Activated CD4-positive, alpha-beta memory T cell treated with anti-CD3 and anti-CD28 coated beads for 36 hours (primary cell): ENCODE measurements at regions of chr16 and their contacts with region 1.

Region 1: DNA sequence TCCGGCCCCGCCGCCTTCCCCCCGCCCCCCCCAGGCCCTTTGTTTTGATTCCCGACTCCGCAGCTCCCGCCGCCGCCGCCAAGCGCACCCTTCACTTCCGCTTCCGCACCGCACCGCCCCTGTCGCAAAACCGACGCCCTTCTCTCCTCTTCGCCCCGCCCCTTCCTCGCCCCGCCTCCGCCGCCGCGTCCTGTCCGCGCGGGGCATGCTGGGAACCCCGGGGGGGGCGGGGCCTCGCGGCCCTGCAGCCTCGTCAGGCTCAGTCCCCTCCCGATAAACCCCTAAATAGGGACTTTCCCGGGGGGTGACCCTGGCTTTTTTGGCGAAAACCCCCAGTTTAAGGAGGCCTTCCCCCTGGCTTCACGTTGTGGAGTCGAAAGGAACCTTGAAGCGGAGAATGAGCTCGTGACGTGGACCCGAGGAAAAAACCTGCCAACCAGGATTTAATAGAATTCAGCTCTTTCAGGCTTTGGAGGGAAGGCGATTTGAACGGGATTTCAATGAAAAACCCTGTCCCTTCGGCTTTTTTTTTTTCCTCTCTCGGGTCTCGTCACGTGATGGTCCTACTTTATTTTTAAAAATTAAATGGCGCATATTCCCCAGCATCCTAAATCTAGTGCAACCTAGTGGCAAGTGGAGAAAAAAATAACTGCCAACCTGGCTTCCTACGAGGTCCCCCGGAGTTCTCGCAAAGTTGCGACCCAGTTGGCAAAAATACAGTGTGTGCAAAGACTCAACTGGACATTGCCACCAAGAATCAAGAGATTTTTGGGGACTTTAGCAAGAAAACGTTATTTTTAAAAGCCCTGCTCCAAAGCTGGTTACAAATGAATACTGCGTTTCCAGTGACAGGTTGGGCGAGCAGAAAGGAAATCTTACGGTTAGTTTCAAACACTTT is at the start of gene MARF1:
- DNase-seq: peak; percentile 99
- H3K4me3 Mint-ChIP-seq: peak within 1 kb of the TSS; percentile 82
- H3K27ac Mint-ChIP-seq: peak within 1 kb of the TSS; percentile 98
- H3K4me1 Mint-ChIP-seq: peaks cover 45% of the 10 kb centered on the region
- H3K27me3 Mint-ChIP-seq: no peaks in the 10 kb centered on the region
- total RNA-seq, gene MARF1: 61.9 to 62.6 TPM

Region 2: DNA sequence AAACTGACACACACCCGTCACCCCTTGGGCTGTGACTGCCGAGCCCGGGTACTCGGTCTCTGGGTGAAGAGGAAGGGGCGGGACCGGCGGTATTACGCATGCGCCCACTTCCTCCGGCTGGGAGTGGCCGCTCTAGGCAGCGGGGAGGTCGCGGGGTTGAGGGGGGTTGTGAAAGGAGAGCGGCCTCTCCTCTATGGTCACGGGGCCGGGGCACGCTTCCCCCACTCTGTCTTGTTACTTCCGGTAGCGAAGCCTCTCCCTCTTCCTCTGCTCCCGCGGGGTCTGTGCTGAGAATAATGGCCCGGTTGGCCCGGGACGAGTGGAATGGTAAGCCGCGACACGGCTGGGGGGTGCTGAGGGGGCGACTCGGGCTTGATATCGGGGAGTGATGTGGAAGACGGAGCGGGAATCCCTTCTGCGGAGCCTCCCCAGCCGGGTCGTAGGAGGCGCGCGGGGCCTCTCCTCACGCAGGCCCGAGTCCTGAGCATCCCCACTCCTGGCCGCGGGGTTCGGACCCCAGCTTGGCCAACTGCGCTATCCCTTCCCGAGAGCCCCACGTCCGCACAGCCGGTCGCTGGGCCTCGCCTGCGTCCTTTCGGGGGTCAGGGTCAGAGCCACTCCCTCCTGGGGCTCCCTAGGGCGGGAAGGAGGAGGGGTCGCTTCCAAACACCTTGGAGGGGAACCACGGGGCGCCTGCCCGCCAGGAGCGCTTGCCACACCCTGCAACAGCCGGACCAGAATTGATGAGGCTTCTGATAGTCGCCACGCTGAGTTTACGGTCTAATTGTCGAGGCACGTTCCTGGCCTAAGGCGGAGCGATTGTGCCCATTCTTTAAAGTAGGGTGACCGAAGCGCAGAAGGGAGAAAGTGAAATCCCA is 1010.4 kb before region 1 on chr16 and contains the start of gene BFAR:
- CTCF ChIA-PET with region 1: no interaction called
- POLR2A ChIA-PET with region 1: no interaction called
- intact Hi-C with region 1: loop called (anchors 5 kb)
- DNase-seq: peak; percentile 99
- H3K4me3 Mint-ChIP-seq: peak within 1 kb of the TSS; percentile 100
- H3K27ac Mint-ChIP-seq: peak within 1 kb of the TSS; percentile 96
- H3K4me1 Mint-ChIP-seq: peaks cover 57% of the 10 kb centered on the region
- H3K27me3 Mint-ChIP-seq: no peaks in the 10 kb centered on the region
- total RNA-seq, gene BFAR: 46.5 to 51.4 TPM

Region 3: DNA sequence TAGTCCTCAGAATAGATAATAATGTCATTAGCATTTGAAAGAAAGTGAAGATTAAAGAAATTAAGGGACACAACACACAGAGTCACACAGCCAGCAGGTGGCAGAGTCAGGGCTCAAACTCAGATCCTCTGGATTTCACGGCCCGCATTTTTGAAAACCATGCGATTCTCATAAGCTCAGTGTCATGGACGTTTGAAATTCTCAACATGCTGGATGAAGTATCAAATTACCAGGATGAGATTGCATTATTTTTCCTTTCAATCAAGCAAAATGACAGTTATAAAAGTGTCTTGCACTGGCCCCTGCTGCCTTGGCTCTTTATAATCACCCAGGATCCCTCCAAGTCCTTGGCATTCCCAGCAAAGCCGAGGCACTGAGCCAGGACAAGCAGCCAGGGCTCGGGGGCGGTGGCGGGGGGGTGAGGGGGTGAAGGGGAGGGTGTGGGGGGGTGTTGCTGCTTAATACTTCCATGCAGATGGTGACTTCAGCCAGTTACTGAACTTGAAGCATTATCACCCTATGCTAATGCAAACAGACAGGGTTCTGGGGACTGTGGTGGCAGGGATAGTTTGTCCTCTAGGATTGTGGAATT is 215.6 kb before region 1 on chr16:
- CTCF ChIA-PET with region 1: interaction called, 12 read pairs
- POLR2A ChIA-PET with region 1: no interaction called
- intact Hi-C with region 1: loop called (anchors 1 kb)
- DNase-seq: peak; percentile 68
- H3K4me3 Mint-ChIP-seq: no peak overlapping the region
- H3K27ac Mint-ChIP-seq: no peak overlapping the region
- H3K4me1 Mint-ChIP-seq: peaks cover 2% of the 10 kb centered on the region
- H3K27me3 Mint-ChIP-seq: peaks cover 2% of the 10 kb centered on the region

Region 4: GRCh38 chr16:15672514-15673167 is 29.3 kb after region 1 on chr16:
- CTCF ChIA-PET with region 1: no interaction called
- POLR2A ChIA-PET with region 1: no interaction called
- intact Hi-C with region 1: loop called (anchors 2 kb)
- DNase-seq: peak; percentile 87
- H3K4me3 Mint-ChIP-seq: peak overlapping the region; percentile 52
- H3K27ac Mint-ChIP-seq: peak overlapping the region; percentile 93
- H3K4me1 Mint-ChIP-seq: peaks cover 43% of the 10 kb centered on the region
- H3K27me3 Mint-ChIP-seq: no peaks in the 10 kb centered on the region

Region 5: GRCh38 chr16:15732416-15732815 is 89.1 kb after region 1 on chr16:
- CTCF ChIA-PET with region 1: no interaction called
- POLR2A ChIA-PET with region 1: no interaction called
- intact Hi-C with region 1: no loop called
- DNase-seq: no peak
- H3K4me3 Mint-ChIP-seq: no peak overlapping the region
- H3K27ac Mint-ChIP-seq: no peak overlapping the region
- H3K4me1 Mint-ChIP-seq: no peaks in the 10 kb centered on the region
- H3K27me3 Mint-ChIP-seq: no peaks in the 10 kb centered on the region

Region 6: GRCh38 chr16:15961060-15961511 is 317.8 kb after region 1 on chr16:
- CTCF ChIA-PET with region 1: no interaction called
- POLR2A ChIA-PET with region 1: no interaction called
- intact Hi-C with region 1: loop called (anchors 5 kb)
- DNase-seq: peak; percentile 86
- H3K4me3 Mint-ChIP-seq: peak overlapping the region; percentile 78
- H3K27ac Mint-ChIP-seq: peak overlapping the region; percentile 100
- H3K4me1 Mint-ChIP-seq: peaks cover 84% of the 10 kb centered on the region
- H3K27me3 Mint-ChIP-seq: no peaks in the 10 kb centered on the region

Region 7: GRCh38 chr16:15988268-15989013 is 345.1 kb after region 1 on chr16:
- CTCF ChIA-PET with region 1: no interaction called
- POLR2A ChIA-PET with region 1: no interaction called
- intact Hi-C with region 1: no loop called
- DNase-seq: no peak
- H3K4me3 Mint-ChIP-seq: no peak overlapping the region
- H3K27ac Mint-ChIP-seq: no peak overlapping the region
- H3K4me1 Mint-ChIP-seq: peaks cover 43% of the 10 kb centered on the region
- H3K27me3 Mint-ChIP-seq: no peaks in the 10 kb centered on the region